Naive thymus-derived CD4-positive, alpha-beta T cell (primary cell): ENCODE measurements at regions of chr13 and their contacts with region 1.

Region 1: DNA sequence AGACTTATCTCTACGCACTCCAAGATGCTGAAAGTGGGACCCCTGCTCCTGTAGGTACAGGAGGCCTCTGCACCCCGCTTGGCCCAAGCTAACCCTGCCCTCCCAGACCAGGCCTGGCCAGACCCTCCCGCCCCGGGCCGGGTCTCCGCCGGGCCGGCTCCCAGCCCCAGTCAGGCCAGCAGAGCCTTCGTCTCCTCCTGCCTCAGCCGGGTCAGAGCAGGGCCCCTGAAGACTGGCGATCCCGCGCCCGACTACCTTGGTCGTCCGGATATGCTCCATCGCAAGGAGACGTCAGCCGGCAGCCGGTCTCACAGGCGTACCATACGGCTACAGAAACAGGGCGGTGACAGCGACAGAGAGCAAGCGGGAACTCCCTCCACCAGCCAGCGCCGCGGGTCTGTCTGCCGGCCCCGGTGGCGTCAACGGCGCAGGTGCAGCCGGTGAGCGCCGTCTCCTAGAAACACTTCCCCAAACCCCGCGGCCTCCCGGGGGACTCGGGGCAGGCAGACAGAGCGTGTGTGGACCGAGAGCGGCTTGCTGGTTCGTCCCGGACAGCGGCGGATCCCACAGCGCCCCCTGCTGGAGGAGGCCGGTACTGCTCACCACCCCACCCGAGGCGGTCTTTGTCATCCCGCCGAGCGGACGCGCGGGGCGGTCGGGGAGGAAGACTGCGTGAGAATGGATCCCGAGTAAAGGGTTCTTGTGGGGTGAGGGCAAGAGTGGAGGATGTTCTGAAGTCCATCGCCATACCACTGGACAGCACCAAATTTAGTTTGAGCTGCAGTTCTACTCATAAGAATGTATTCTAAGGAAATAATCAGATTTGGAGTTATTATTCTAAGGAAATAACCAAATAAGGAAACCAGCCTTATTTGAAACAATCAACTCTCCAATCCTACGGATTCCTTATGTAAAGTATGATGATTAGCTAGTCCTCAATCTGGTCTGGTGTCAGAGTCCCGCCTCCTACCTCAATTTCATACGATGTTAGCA is at the start of gene MTMR6:
- DNase-seq: peak; percentile 90 to 98 (median 93)
- ATAC-seq: peak; percentile 96
- H3K4me3 ChIP-seq: peak within 1 kb of the TSS; percentile 85
- H3K4me3 Mint-ChIP-seq: peak within 1 kb of the TSS; percentile 94 to 100 (median 96)
- H3K27ac ChIP-seq: peak within 1 kb of the TSS; percentile 100
- H3K27ac Mint-ChIP-seq: peak within 1 kb of the TSS; percentile 92 to 99 (median 97)
- H3K4me1 ChIP-seq: peaks cover 12 to 24% of the 10 kb centered on the region in 2 donors
- H3K4me1 Mint-ChIP-seq: peaks cover 23 to 58% (median 50%) of the 10 kb centered on the region in 7 donors
- H3K27me3 ChIP-seq: peaks cover 0 to 3% of the 10 kb centered on the region in 2 donors
- H3K27me3 Mint-ChIP-seq: peaks cover 0 to 17% (median 10%) of the 10 kb centered on the region in 5 donors
- total RNA-seq, gene MTMR6: 16.0 to 23.2 (median 18.5) TPM

Region 2: GRCh38 chr13:23888658-23889614 is 1398.3 kb before region 1 on chr13 and contains the start of gene MIPEP:
- CTCF ChIA-PET with region 1: no interaction called
- POLR2A ChIA-PET with region 1: no interaction called
- intact Hi-C with region 1: loop called in 1 of 2 experiments (anchors 2 kb)
- DNase-seq: peak; percentile 68 to 94 (median 83)
- ATAC-seq: peak; percentile 98
- H3K4me3 ChIP-seq: peak within 1 kb of the TSS; percentile 88
- H3K4me3 Mint-ChIP-seq: peak within 1 kb of the TSS; percentile 85 to 96 (median 92)
- H3K27ac ChIP-seq: peak within 1 kb of the TSS; percentile 70
- H3K27ac Mint-ChIP-seq: peak within 1 kb of the TSS; percentile 72 to 92 (median 84)
- H3K4me1 ChIP-seq: peaks cover 0 to 5% of the 10 kb centered on the region in 2 donors
- H3K4me1 Mint-ChIP-seq: peaks cover 12 to 31% (median 25%) of the 10 kb centered on the region in 7 donors
- H3K27me3 ChIP-seq: no peaks in the 10 kb centered on the region
- H3K27me3 Mint-ChIP-seq: no peaks in the 10 kb centered on the region
- total RNA-seq, gene MIPEP: 8.0 to 10.5 (median 9.2) TPM

Region 3: DNA sequence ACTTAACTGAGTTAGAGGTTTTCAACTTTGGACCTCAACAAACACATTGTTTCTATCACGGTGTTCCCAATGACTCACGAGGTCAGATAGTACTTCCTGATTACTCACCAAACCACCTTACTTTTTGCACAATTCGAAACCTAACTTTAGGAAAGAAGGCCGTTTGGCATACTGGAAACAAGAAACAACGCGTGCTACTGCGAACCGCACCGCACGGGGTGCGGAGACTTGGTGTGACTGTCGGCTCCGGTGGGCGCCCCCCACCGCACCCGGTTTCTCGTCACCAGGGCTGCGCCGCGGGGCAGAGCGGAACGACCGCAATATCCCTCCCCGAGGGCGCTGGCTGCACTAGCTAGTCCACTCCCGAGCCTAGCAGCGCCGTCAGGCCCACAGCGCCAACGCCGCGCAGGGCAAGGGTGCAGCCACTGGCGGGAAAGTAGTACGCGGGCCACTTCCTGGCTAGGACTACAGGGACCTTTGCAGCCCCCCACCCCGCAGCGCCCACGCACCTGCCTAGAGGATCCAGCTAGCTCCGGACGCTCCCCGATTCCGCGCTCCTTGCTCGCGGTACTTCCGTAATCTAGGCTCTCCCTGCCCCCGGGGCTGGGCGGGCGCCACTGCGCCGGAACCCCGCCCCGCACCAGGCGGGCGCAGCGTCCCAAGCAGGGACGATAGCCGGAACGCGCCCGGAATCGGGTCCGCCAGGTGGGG is 774.9 kb before region 1 on chr13 and contains the start of gene PARP4:
- CTCF ChIA-PET with region 1: no interaction called
- POLR2A ChIA-PET with region 1: no interaction called
- intact Hi-C with region 1: loop called in 1 of 2 experiments (anchors 2 kb)
- DNase-seq: peak; percentile 49 to 74 (median 68)
- ATAC-seq: peak; percentile 85
- H3K4me3 ChIP-seq: peak within 1 kb of the TSS; percentile 95
- H3K4me3 Mint-ChIP-seq: peak within 1 kb of the TSS; percentile 88 to 96 (median 92)
- H3K27ac ChIP-seq: peak within 1 kb of the TSS; percentile 67
- H3K27ac Mint-ChIP-seq: peak within 1 kb of the TSS; percentile 68 to 93 (median 88)
- H3K4me1 ChIP-seq: peaks cover 3 to 7% of the 10 kb centered on the region in 2 donors
- H3K4me1 Mint-ChIP-seq: peaks cover 22 to 51% (median 41%) of the 10 kb centered on the region in 7 donors
- H3K27me3 ChIP-seq: no peaks in the 10 kb centered on the region
- H3K27me3 Mint-ChIP-seq: peaks cover 0 to 4% (median 0%) of the 10 kb centered on the region in 5 donors
- total RNA-seq, gene PARP4: 33.4 to 71.1 (median 65.4) TPM

Region 4: DNA sequence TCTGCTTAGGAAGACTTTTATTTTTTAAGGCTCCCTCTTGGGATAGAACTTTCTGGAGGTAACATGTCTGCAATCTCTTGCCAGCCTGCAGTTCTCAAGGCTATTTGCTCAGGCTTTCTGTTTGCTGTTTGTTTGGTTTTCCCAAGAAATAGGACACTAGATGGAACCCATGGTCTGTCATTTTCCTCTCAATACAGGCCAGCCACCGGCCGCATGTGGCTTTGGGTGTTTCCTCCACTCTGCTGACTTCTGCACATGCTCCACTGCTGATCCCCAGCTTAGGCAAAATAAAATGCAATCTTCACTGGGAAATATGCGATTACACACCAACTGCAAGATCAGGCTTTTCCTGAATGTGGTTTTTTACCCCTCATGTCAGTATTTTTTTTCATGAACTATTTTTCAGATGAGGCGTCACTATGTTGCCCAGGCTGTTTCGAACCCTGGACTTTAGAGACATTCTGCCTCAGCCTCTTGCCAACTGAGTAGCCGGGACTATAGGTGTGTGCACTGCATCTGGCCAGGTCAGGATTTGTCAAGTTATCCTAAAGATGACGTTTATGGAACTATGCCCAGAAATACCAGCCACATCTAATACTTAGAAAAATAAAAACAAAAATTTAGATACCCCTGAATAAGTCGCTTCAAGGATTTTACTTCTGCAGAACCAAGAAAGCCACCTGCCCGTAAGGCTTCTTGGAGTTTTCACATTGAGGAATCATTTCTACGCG is 285.6 kb before region 1 on chr13:
- CTCF ChIA-PET with region 1: no interaction called
- POLR2A ChIA-PET with region 1: no interaction called
- intact Hi-C with region 1: loop called in 1 of 2 experiments (anchors 10 kb)
- DNase-seq: no peak
- ATAC-seq: no peak
- H3K4me3 ChIP-seq: no peak overlapping the region
- H3K4me3 Mint-ChIP-seq: no peak overlapping the region
- H3K27ac ChIP-seq: no peak overlapping the region
- H3K27ac Mint-ChIP-seq: no peak overlapping the region
- H3K4me1 ChIP-seq: no peaks in the 10 kb centered on the region
- H3K4me1 Mint-ChIP-seq: peaks cover 0 to 3% (median 0%) of the 10 kb centered on the region in 7 donors
- H3K27me3 ChIP-seq: no peaks in the 10 kb centered on the region
- H3K27me3 Mint-ChIP-seq: peaks cover 56 to 68% (median 57%) of the 10 kb centered on the region in 5 donors

Region 5: GRCh38 chr13:25232937-25233515 is 54.2 kb before region 1 on chr13:
- CTCF ChIA-PET with region 1: no interaction called
- POLR2A ChIA-PET with region 1: interaction called, 3 read pairs
- intact Hi-C with region 1: loop called in 1 of 2 experiments (anchors 2 kb)
- DNase-seq: peak in 2 of 9 donors; percentile 5 to 7
- ATAC-seq: peak; percentile 62
- H3K4me3 ChIP-seq: no peak overlapping the region
- H3K4me3 Mint-ChIP-seq: no peak overlapping the region
- H3K27ac ChIP-seq: no peak overlapping the region
- H3K27ac Mint-ChIP-seq: no peak overlapping the region
- H3K4me1 ChIP-seq: no peaks in the 10 kb centered on the region
- H3K4me1 Mint-ChIP-seq: peaks cover 0 to 8% (median 7%) of the 10 kb centered on the region in 7 donors
- H3K27me3 ChIP-seq: no peaks in the 10 kb centered on the region
- H3K27me3 Mint-ChIP-seq: peaks cover 2 to 17% (median 6%) of the 10 kb centered on the region in 5 donors

Region 6: DNA sequence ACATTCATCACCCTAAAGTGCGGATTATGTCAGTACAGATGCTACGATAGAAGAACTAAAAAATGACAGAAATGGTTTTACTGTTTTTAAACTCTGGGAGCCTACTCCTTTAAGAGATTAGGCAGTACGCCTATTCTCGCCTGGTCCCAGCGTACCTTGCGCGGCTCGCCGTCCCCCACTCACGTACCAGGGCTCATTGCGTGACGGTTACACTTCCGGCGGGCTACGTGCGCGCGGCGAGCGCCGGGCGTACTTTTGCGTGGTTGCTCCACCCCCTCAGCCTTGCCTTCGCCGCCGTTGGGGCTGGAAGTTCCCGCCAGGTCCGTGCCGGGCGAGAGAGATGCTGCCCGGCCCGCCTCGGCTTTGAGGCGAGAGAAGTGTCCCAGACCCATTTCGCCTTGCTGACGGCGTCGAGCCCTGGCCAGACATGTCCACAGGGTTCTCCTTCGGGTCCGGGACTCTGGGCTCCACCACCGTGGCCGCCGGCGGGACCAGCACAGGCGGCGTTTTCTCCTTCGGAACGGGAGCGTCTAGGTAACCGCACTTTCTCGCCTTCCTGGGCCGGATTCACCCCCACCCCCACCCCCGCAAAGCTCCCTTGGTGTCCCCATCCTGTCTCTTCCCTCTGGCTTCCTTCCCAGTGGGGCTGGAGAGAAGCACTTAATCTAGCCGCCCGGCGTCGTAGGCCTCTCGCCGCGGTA is 14.2 kb after region 1 on chr13 and contains the start of gene NUP58:
- CTCF ChIA-PET with region 1: interaction called, 5 read pairs
- POLR2A ChIA-PET with region 1: interaction called, 6 read pairs
- intact Hi-C with region 1: loop called (anchors 1 kb)
- DNase-seq: peak; percentile 83 to 94 (median 92)
- ATAC-seq: peak; percentile 99
- H3K4me3 ChIP-seq: peak within 1 kb of the TSS; percentile 64
- H3K4me3 Mint-ChIP-seq: peak within 1 kb of the TSS; percentile 86 to 95 (median 92)
- H3K27ac ChIP-seq: peak within 1 kb of the TSS; percentile 93
- H3K27ac Mint-ChIP-seq: peak within 1 kb of the TSS; percentile 87 to 97 (median 93)
- H3K4me1 ChIP-seq: peaks cover 13 to 22% of the 10 kb centered on the region in 2 donors
- H3K4me1 Mint-ChIP-seq: peaks cover 21 to 51% (median 47%) of the 10 kb centered on the region in 7 donors
- H3K27me3 ChIP-seq: peaks cover 0 to 5% of the 10 kb centered on the region in 2 donors
- H3K27me3 Mint-ChIP-seq: peaks cover 7 to 19% (median 10%) of the 10 kb centered on the region in 5 donors
- total RNA-seq, gene NUP58: 41.1 to 89.1 (median 57.0) TPM

Region 7: GRCh38 chr13:25901460-25902376 is 614.5 kb after region 1 on chr13:
- CTCF ChIA-PET with region 1: no interaction called
- POLR2A ChIA-PET with region 1: no interaction called
- intact Hi-C with region 1: loop called in 1 of 2 experiments (anchors 5 kb)
- DNase-seq: peak in 7 of 9 donors; percentile 34 to 82 (median 72)
- ATAC-seq: peak; percentile 95
- H3K4me3 ChIP-seq: no peak overlapping the region
- H3K4me3 Mint-ChIP-seq: peak overlapping the region in 4 of 10 donors; percentile 1 to 9 (median 5)
- H3K27ac ChIP-seq: peak overlapping the region; percentile 24
- H3K27ac Mint-ChIP-seq: peak overlapping the region in 4 of 9 donors; percentile 12 to 67 (median 33)
- H3K4me1 ChIP-seq: peaks cover 15 to 66% of the 10 kb centered on the region in 2 donors
- H3K4me1 Mint-ChIP-seq: peaks cover 0 to 26% (median 25%) of the 10 kb centered on the region in 7 donors
- H3K27me3 ChIP-seq: no peaks in the 10 kb centered on the region
- H3K27me3 Mint-ChIP-seq: peaks cover 0 to 3% (median 0%) of the 10 kb centered on the region in 5 donors